Natural killer cell (primary cell): ENCODE measurements at regions of chr15 and their contacts with region 1.

Region 1: DNA sequence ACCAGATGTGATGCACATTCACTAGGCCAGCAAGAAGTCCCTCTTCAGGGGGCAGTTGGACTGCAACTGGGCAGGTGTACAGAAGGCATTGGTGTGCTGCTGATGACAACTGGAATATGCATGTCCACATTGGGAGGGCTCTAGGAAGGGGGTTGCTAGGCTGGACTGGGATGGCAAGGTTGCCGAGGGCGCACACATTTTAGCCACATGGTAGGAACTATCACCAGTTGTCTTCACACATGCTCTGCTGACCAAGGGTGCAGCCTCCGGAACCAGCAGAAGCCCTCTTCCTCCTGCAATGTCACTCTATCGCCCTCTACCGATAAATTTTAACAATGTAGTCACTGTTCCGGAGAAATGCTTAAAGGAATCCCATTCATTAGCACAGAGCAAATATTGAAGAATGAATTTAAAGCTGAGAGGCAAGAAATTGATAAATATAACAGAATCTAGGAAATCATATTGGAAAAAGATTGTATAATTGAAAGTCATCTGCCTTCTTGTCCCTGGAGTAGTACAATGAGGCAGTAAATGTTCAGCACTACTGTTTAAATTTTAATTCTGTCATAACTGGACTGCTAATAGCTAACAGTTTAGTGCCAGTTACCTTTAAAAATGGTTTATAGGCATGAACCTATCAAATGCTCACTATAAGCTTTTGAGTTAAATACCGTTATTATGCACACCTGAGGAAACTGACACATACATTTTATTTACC is 22.6 kb upstream of the LYSMD4 start:
- DNase-seq: peak in 1 of 2 donors; percentile 79
- ATAC-seq: peak in 2 of 3 donors; percentile 83 to 88
- H3K4me3 ChIP-seq: no peak overlapping the region
- H3K4me3 Mint-ChIP-seq: no peak overlapping the region
- H3K27ac ChIP-seq: no peak overlapping the region
- H3K27ac Mint-ChIP-seq: no peak overlapping the region
- H3K4me1 ChIP-seq: peaks cover 5% of the 10 kb centered on the region
- H3K4me1 Mint-ChIP-seq: no peaks in the 10 kb centered on the region
- H3K27me3 ChIP-seq: no peaks in the 10 kb centered on the region
- H3K27me3 Mint-ChIP-seq: peaks cover 3 to 8% of the 10 kb centered on the region in 2 donors
- CTCF ChIP-seq: peak; percentile 76

Region 2: DNA sequence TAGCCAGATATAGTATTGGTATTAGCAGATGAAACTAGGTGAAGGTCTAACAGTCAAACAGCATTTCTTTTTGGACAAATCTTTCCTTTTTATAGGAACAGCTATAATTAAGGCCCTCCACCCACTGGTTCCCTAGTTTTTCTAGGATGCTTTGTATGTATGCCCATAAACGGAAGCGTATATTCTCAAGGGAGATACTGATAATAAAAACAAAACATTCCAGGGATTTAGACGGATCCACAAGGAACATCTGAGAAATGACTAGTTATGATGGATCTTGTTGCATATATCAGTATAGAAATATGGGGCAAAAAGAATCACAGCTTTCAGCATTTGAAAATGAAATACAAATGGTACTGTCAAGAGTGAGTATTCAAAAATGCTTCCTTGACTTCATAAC is 482.1 kb before region 1 on chr15:
- intact Hi-C with region 1: loop called (anchors 1 kb)
- DNase-seq: no peak
- ATAC-seq: no peak
- H3K4me3 ChIP-seq: no peak overlapping the region
- H3K4me3 Mint-ChIP-seq: no peak overlapping the region
- H3K27ac ChIP-seq: no peak overlapping the region
- H3K27ac Mint-ChIP-seq: no peak overlapping the region
- H3K4me1 ChIP-seq: no peaks in the 10 kb centered on the region
- H3K4me1 Mint-ChIP-seq: peaks cover 1% of the 10 kb centered on the region in 2 donors
- H3K27me3 ChIP-seq: no peaks in the 10 kb centered on the region
- H3K27me3 Mint-ChIP-seq: no peaks in the 10 kb centered on the region
- CTCF ChIP-seq: no peak

Region 3: DNA sequence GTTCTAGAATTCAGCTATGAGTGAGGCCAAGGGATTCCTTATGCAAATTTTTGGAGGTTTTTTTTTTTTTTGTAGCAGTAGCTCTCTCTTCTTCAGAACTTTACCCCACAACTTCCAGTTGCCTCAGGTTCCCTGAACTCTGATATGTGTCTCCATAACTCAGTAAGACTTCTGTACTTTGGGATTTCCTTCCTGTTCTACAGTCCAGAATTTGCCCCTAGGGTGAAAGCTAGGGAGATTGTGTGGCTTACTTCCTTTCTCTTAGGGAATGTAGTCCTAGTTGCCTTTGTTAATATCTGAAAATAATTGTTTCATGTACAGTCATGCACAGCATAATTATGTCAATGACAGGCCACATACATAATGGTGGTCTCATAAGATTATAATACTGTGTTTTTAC is 473.7 kb before region 1 on chr15:
- intact Hi-C with region 1: loop called (anchors 5 kb)
- DNase-seq: no peak
- ATAC-seq: no peak
- H3K4me3 ChIP-seq: no peak overlapping the region
- H3K4me3 Mint-ChIP-seq: no peak overlapping the region
- H3K27ac ChIP-seq: no peak overlapping the region
- H3K27ac Mint-ChIP-seq: no peak overlapping the region
- H3K4me1 ChIP-seq: no peaks in the 10 kb centered on the region
- H3K4me1 Mint-ChIP-seq: peaks cover 21 to 22% of the 10 kb centered on the region in 2 donors
- H3K27me3 ChIP-seq: no peaks in the 10 kb centered on the region
- H3K27me3 Mint-ChIP-seq: no peaks in the 10 kb centered on the region
- CTCF ChIP-seq: no peak